ENCODE measurements at regions of chr22 and their contacts with region 1.

Region 1: DNA sequence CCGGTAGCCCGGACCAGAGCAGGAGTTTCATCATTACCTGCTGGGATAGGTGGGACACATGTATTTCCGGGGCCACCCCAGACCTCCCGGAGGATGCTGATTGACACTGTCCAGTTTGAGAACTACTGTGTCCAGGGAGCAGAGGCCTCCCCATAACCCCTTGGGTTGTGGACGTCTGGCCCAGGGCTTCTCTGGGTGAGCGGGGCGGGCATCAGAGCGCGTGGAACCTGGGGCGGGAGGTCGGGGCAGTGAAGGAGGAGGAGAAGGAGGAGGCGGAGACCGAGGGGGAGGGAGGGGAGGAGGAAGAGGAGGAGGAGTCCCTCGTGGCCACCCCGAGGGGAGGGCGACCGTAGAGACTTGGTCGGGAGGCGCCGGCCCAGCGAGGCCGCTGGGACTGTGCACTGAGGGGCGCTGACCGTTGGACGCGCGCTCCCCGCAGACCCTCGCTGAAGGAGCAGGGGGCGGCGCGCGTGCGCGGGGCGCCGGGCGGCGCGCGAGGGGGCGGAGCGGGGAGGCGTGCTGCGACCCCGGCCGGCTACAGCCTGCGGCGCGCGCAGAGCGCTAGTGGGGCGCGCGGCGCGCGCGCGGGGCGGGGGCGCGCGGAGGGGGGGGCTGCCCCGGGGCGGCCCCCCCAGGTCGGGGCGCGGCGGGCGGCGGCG is at the start of gene GRK3:
- DNase-seq: peak; percentile 89
- ATAC-seq: peak; percentile 61
- H3K4me3 ChIP-seq: peak within 1 kb of the TSS; percentile 71 to 95 (median 84)
- H3K4me3 Mint-ChIP-seq: peak within 1 kb of the TSS; percentile 94
- H3K27ac ChIP-seq: peak within 1 kb of the TSS; percentile 91 to 97
- H3K27ac Mint-ChIP-seq: peak within 1 kb of the TSS; percentile 95
- H3K4me1 ChIP-seq: peaks cover 51 to 61% of the 10 kb centered on the region in 2 donors
- H3K4me1 Mint-ChIP-seq: peaks cover 74% of the 10 kb centered on the region
- H3K27me3 ChIP-seq: no peaks in the 10 kb centered on the region
- H3K27me3 Mint-ChIP-seq: no peaks in the 10 kb centered on the region
- CTCF ChIP-seq: no peak
- total RNA-seq, gene GRK3: 61.0 and 65.3 TPM in 2 replicates

Region 2: DNA sequence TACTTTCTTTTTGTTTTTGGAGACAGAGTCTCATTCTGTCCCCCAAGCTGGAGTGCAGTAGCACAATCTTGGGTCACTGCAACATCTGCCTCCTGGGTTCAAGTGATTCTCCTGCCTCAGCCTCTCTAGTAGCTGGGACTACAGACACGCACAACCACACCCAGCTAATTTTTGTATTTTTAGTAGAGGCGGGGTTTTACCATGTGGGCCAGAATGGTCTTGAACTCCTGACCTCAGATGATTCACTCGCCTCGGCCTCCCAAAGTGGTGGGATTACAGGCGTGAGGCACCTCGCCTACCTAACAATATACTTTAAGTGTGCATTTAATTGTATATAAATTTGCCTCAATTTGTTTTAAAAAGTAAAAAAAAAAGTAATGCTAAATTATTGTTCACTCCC is 38.5 kb after region 1 on chr22:
- CTCF ChIA-PET with region 1: no interaction called
- POLR2A ChIA-PET with region 1: no interaction called
- intact Hi-C with region 1: loop called (anchors 5 kb)
- DNase-seq: no peak
- ATAC-seq: no peak
- H3K4me3 ChIP-seq: no peak overlapping the region
- H3K4me3 Mint-ChIP-seq: no peak overlapping the region
- H3K27ac ChIP-seq: peak overlapping the region in 1 of 2 donors; percentile 30
- H3K27ac Mint-ChIP-seq: no peak overlapping the region
- H3K4me1 ChIP-seq: peaks cover 11 to 25% of the 10 kb centered on the region in 2 donors
- H3K4me1 Mint-ChIP-seq: peaks cover 60% of the 10 kb centered on the region
- H3K27me3 ChIP-seq: no peaks in the 10 kb centered on the region
- H3K27me3 Mint-ChIP-seq: no peaks in the 10 kb centered on the region
- CTCF ChIP-seq: no peak

Region 3: GRCh38 chr22:25650833-25651232 is 86.4 kb after region 1 on chr22:
- CTCF ChIA-PET with region 1: interaction called, 3 read pairs
- POLR2A ChIA-PET with region 1: no interaction called
- intact Hi-C with region 1: loop called (anchors 2 kb)
- DNase-seq: peak; percentile 59
- ATAC-seq: peak; percentile 85
- H3K4me3 ChIP-seq: peak overlapping the region in 1 of 5 experiments; percentile 18
- H3K4me3 Mint-ChIP-seq: peak overlapping the region; percentile 71
- H3K27ac ChIP-seq: peak overlapping the region; percentile 53 to 68
- H3K27ac Mint-ChIP-seq: peak overlapping the region; percentile 81
- H3K4me1 ChIP-seq: peaks cover 21 to 27% of the 10 kb centered on the region in 2 donors
- H3K4me1 Mint-ChIP-seq: peaks cover 65% of the 10 kb centered on the region
- H3K27me3 ChIP-seq: no peaks in the 10 kb centered on the region
- H3K27me3 Mint-ChIP-seq: no peaks in the 10 kb centered on the region
- CTCF ChIP-seq: no peak

Region 4: DNA sequence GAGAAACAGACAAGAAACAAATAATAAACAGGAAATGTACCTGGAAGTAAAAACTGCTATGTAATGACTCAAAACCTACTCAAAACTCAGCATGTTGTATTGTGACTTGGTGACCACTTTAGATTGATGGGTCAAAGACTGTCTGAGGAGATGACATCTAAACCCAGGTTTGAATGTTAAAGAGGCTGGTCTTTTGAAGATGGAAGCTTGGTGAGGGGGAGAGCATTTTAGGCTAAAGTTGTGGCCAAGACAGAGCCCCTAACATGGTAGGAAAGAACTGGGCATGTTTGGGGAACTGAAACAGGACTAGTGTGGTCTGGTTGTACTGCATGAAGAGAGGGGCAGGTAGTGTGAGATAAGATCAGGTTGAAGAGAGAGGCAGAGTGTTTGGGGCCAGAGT is 92.3 kb after region 1 on chr22:
- CTCF ChIA-PET with region 1: no interaction called
- POLR2A ChIA-PET with region 1: interaction called, 4 read pairs
- intact Hi-C with region 1: loop called (anchors 2 kb)
- DNase-seq: peak; percentile 74
- ATAC-seq: peak; percentile 100
- H3K4me3 ChIP-seq: no peak overlapping the region
- H3K4me3 Mint-ChIP-seq: peak overlapping the region; percentile 9
- H3K27ac ChIP-seq: peak overlapping the region; percentile 49 to 64
- H3K27ac Mint-ChIP-seq: peak overlapping the region; percentile 69
- H3K4me1 ChIP-seq: peaks cover 19 to 39% of the 10 kb centered on the region in 2 donors
- H3K4me1 Mint-ChIP-seq: peaks cover 74% of the 10 kb centered on the region
- H3K27me3 ChIP-seq: no peaks in the 10 kb centered on the region
- H3K27me3 Mint-ChIP-seq: no peaks in the 10 kb centered on the region
- CTCF ChIP-seq: no peak

Region 5: DNA sequence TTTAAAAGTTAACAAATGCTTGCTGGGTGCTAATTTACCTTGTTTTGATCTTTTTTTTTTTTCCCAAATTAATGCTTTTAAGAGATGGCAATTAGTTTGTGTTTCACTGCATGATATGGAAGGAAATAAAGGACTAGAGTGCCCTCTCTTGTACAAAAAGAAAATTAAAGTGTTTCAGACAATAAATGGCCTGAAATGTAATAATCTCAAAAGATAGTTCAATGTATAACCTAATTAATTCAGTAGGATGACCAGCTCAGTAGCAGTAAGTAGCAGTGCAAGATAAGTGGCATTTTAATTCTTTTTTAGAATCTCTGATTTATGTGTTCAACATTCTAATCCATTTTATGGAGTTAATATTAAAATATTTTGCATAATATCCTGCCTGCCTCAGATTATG is 137.6 kb after region 1 on chr22:
- CTCF ChIA-PET with region 1: interaction called, 11 read pairs
- POLR2A ChIA-PET with region 1: no interaction called
- intact Hi-C with region 1: no loop called
- DNase-seq: peak; percentile 42
- ATAC-seq: peak; percentile 36
- H3K4me3 ChIP-seq: no peak overlapping the region
- H3K4me3 Mint-ChIP-seq: no peak overlapping the region
- H3K27ac ChIP-seq: no peak overlapping the region
- H3K27ac Mint-ChIP-seq: no peak overlapping the region
- H3K4me1 ChIP-seq: no peaks in the 10 kb centered on the region
- H3K4me1 Mint-ChIP-seq: peaks cover 7% of the 10 kb centered on the region
- H3K27me3 ChIP-seq: no peaks in the 10 kb centered on the region
- H3K27me3 Mint-ChIP-seq: no peaks in the 10 kb centered on the region
- CTCF ChIP-seq: peak; percentile 70

Measured in B cell (primary cell).